Thyroid gland (tissue), 4 donors: ENCODE measurements at regions of chr11 and their contacts with region 1.

Region 1: DNA sequence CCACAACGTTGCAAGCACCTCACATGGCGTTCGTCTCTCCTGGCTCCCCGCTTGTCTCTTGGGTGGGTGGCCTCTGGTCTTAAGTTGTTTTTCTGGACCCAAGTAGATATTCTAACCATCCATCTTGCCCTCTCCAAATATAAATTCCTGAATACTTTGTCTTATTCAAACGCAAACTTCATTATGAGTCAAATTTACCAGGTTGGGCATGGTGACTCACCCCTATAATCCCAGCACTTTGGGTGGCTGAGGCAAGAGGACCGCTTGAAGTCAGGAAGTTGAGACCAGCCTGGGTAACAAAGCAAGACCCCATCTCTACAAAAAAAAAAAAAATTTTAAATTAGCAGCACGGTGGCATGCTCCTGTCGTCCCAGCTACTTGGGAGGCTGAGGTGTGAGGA is 5.1 kb upstream of the IGSF9B start:
- DNase-seq: no peak
- H3K4me3 ChIP-seq: no peak overlapping the region
- H3K27ac ChIP-seq: no peak overlapping the region
- H3K4me1 ChIP-seq: peaks cover 14 to 16% of the 10 kb centered on the region in 2 donors
- H3K27me3 ChIP-seq: no peaks in the 10 kb centered on the region
- CTCF ChIP-seq: no peak
- POLR2A ChIP-seq: no peak

Region 2: DNA sequence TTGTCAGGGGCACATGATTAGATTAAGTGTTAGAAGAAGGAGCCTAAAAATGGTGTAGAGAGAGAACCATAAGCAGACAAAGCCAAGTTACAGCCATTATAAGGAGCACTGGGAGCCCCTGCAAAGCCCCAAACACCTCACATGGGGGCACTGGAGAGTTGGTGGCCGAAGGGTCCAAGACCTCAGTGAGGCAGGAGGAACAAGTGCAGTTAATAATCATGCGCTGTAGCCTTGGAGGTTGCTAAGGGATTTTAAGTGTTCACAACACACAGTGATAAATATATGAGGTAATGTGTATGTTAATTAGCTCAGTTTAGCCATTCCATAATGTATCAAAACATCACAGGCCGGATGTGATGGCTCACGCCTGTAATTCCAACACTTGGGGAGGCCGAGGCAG is 52.6 kb after region 1 on chr11:
- intact Hi-C with region 1: no loop called
- DNase-seq: no peak
- H3K4me3 ChIP-seq: no peak overlapping the region
- H3K27ac ChIP-seq: no peak overlapping the region
- H3K4me1 ChIP-seq: no peaks in the 10 kb centered on the region
- H3K27me3 ChIP-seq: no peaks in the 10 kb centered on the region
- CTCF ChIP-seq: no peak
- POLR2A ChIP-seq: no peak

Region 3: DNA sequence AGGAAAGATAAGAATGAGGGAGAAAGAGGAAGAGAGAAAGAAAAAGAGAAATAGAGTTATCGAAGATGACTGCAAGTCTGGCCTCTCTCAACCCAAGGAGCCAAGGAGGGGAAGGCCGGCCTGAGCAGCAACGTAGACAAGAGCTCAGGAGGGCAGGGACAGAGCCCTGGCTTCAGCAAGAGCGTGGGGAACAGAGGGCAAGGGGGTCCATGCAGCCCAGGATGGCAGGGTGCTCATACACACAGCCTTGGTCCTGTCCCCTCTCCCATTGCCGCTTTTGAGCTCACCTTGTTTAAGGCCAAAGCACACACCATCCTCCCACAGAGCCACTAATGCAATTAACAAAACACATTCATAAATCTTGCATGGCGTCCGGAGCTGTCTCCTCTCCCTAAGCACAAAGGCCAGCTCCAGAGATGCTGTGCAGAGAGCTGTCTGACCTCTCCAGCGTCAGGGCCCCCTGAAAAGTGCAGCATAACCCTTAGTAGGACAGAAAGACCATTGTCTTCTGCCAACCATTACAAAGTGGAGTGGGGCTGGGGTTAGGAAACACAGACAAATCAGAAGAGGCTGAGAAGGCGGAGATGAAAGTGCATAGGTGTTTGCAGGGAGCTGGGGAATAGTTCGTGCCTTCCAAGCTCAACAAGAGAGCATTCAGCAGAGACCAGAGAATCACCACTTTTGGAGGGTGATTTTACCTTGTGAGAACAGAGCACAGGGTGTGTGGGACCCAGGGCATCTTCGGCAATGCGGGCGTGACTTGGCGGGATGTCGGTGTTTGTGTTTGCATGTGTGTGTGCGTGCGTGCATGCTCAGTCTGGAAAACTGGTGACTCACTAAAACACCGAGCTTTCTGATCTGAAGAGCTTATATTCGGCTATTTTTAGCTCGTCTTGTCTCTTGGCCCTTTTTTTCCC is 78.8 kb after region 1 on chr11:
- intact Hi-C with region 1: loop called (anchors 5 kb)
- DNase-seq: no peak
- H3K4me3 ChIP-seq: no peak overlapping the region
- H3K27ac ChIP-seq: no peak overlapping the region
- H3K4me1 ChIP-seq: peaks cover 0 to 15% of the 10 kb centered on the region in 2 donors
- H3K27me3 ChIP-seq: no peaks in the 10 kb centered on the region
- CTCF ChIP-seq: no peak
- POLR2A ChIP-seq: no peak